Aorta (tissue), 5 donors: ENCODE measurements at regions of chr1 and their contacts with region 1.

Region 1: DNA sequence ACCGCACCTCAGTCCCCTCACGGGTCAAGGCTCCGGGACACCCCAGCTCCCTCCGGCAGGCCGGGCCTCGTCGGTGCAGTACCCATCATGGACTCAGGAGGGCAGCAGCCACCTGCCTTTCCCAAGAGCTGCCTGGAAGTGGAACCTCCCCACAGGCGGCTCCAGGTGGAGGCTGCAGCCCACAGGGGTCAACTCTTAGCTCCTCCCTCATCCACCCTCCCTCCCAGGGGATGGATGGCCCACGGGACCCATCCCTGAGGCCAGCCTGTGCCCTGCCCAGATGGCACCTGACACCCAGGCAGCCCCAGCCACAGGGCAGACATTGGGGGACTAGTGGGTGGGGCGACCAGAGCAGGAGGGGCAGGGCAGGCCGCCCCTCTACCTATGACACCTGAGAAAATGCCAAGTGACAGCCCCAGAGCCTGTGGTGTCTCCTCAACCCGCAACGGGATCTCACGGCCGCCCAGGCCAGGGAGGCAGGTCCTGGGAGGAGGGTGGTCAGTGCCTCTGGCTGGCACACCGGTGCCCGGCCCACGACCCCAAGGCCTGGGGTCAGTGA is 1.2 kb upstream of the ARHGEF16 start:
- DNase-seq: peak; percentile 80 to 92
- ATAC-seq: peak; percentile 89
- H3K4me3 ChIP-seq: no peak overlapping the region
- H3K27ac ChIP-seq: no peak overlapping the region
- H3K4me1 ChIP-seq: no peaks in the 10 kb centered on the region
- H3K27me3 ChIP-seq: no peaks in the 10 kb centered on the region

Region 2: DNA sequence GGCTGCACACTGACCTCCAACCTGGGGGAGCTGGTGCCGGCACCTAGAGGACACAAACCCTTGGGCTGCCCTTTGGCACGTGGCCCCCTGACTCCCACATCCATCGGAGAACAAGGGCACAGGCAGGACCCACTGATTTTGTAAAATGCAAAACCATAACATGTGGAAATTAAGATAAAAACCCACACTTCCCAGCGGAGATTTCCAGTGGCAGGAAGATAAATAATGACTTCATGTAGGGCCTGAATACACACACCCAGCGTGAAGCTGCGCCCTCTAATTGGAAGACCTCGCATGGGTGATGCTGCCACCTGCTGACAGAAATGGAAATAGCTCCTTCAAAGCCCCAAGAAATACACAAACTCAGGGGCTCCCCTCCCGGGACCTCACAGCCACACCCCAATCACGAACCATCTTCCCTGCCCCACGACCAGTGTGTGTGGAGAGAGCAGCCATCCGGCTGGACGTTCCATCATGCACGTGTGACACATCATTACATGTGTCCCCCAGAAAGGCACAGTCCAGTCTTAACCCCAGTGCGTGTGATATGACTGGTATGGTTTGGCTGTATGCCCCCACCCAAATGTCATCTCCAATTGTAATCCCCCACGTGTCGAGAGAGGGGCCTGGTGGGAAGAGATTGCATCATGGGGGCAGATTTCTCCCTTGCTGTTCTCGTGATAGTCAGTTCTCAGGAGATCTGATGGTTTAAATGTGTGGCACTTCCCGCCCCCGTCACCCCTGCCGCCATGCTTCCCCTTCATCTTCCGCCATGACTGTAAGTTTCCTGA is 165.8 kb after region 1 on chr1:
- intact Hi-C with region 1: loop called (anchors 2 kb)
- DNase-seq: peak in 1 of 2 donors; percentile 78
- ATAC-seq: peak; percentile 79
- H3K4me3 ChIP-seq: no peak overlapping the region
- H3K27ac ChIP-seq: no peak overlapping the region
- H3K4me1 ChIP-seq: no peaks in the 10 kb centered on the region
- H3K27me3 ChIP-seq: no peaks in the 10 kb centered on the region

Region 3: GRCh38 chr1:3722846-3723245 is 269.6 kb after region 1 on chr1:
- intact Hi-C with region 1: loop called (anchors 5 kb)
- DNase-seq: no peak
- ATAC-seq: no peak
- H3K4me3 ChIP-seq: no peak overlapping the region
- H3K27ac ChIP-seq: no peak overlapping the region
- H3K4me1 ChIP-seq: no peaks in the 10 kb centered on the region
- H3K27me3 ChIP-seq: no peaks in the 10 kb centered on the region

Region 4: GRCh38 chr1:3796215-3797061 is 343.2 kb after region 1 on chr1 and contains the start of gene LRRC47:
- intact Hi-C with region 1: loop called (anchors 10 kb)
- DNase-seq: peak; percentile 96 to 99
- ATAC-seq: peak; percentile 100
- H3K4me3 ChIP-seq: peak within 1 kb of the TSS; percentile 66 to 91
- H3K27ac ChIP-seq: peak within 1 kb of the TSS in 1 of 2 donors; percentile 14
- H3K4me1 ChIP-seq: peaks cover 0 to 6% of the 10 kb centered on the region in 2 donors
- H3K27me3 ChIP-seq: no peaks in the 10 kb centered on the region
- total RNA-seq, gene LRRC47: 31.9 to 38.8 TPM

Region 5: GRCh38 chr1:3809680-3810079 is 356.4 kb after region 1 on chr1:
- intact Hi-C with region 1: no loop called
- DNase-seq: peak in 1 of 2 donors; percentile 43
- ATAC-seq: no peak
- H3K4me3 ChIP-seq: no peak overlapping the region
- H3K27ac ChIP-seq: no peak overlapping the region
- H3K4me1 ChIP-seq: no peaks in the 10 kb centered on the region
- H3K27me3 ChIP-seq: no peaks in the 10 kb centered on the region